ENCODE measurements at regions of chr6 and their contacts with region 1.

Region 1: DNA sequence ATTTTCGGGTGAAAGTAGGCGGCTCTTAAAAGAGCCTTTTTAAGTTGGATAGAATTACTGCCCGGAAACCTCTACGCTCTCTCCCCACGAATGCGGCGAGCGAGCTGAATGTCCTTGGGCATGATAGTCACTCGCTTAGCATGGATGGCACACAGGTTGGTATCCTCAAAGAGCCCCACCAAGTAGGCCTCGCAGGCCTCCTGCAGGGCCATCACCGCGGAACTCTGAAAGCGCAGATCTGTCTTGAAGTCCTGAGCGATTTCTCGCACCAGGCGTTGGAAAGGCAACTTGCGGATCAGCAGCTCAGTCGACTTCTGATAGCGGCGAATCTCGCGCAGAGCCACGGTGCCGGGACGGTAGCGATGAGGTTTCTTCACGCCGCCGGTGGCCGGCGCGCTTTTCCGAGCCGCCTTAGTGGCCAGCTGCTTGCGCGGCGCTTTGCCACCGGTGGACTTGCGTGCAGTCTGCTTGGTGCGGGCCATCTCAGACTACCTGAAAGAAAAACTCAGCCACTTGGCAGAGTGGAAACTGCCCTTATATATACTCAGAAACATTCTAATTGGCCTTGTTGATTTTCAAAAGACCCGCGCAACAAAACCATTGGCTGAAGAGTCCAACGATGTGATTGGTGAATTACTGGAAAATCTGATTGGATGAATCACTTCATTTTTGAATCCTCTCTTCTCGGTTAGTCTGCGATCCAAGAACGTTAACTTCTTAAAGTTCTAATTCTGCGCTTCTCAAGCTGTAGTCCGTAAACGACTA is 93.9 kb upstream of the BTN3A2 start:
- DNase-seq: peak; percentile 80
- ATAC-seq: peak; percentile 38
- H3K4me3 Mint-ChIP-seq: no peak overlapping the region
- H3K27ac Mint-ChIP-seq: no peak overlapping the region
- H3K4me1 Mint-ChIP-seq: peaks cover 24% of the 10 kb centered on the region
- H3K27me3 Mint-ChIP-seq: no peaks in the 10 kb centered on the region

Region 2: DNA sequence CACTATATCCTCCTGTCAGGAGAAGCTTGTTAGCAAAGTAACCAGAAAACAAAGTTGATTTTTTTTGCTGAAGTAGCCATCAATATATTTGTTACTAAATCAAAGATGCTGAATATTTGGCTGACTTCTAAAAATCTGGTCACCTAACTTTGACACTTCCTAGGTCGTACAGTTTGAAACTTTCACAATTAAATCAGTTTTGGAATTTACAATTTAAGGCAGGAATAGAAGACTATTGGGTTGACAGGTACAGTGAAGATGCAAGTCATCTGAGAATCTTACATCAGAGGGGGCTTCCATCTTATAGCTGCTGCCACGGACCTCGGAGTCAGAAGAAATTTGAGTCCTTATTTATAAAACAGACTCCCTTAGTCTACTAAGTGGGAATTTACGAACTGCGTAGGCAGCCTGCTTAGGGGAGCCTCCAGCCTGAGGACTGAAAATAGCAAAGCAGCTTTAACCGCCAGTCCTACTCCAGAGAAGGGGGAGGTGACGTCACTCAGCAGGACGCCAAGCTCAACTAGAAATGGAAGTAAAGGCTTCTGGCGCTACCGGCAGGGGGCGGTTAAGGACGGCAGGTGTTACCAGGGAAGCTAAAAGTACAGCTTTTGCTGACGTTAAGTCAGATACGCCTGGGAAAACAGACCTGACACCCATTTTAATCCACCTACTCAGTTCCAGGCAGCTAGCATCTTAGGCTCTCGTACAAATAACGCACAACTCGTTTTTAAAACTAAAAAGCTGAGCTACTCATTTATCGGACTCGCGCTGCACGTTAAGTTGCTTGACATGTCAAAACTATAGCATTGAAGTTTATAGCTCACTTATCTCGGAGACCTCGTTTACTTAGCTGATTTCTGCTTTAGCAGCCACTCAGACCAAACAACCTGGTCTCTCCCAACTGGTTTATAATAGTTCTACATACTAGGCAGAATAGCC is 244.9 kb before region 1 on chr6:
- POLR2A ChIA-PET with region 1: interaction called, 68 read pairs
- DNase-seq: peak; percentile 86
- ATAC-seq: peak; percentile 35
- H3K4me3 Mint-ChIP-seq: peak overlapping the region; percentile 89
- H3K27ac Mint-ChIP-seq: peak overlapping the region; percentile 99
- H3K4me1 Mint-ChIP-seq: peaks cover 75% of the 10 kb centered on the region
- H3K27me3 Mint-ChIP-seq: no peaks in the 10 kb centered on the region

Region 3: DNA sequence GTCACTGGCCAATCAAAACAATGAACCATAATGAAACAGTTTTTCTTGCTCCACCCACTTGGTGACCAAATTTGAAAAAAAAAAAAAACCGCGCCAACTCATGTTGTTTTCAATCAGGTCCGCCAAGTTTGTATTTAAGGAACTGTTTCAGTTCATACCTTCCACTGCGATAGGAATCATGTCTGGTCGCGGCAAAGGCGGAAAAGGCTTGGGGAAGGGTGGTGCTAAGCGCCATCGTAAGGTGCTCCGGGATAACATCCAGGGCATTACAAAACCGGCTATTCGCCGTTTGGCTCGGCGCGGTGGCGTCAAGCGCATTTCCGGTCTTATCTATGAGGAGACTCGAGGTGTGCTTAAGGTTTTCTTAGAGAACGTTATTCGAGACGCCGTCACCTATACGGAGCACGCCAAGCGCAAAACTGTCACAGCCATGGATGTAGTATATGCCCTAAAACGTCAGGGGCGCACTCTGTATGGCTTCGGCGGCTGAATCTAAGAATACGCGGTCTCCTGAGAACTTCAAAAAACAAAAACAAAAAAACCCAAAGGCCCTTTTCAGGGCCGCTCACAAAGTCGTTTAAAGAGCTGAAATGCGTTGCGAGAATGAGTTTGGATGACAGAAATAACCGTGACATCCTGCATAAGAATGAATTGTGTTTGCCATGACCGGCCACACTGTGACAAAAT is 167.2 kb before region 1 on chr6:
- POLR2A ChIA-PET with region 1: interaction called, 15 read pairs
- DNase-seq: peak; percentile 86
- ATAC-seq: peak; percentile 89
- H3K4me3 Mint-ChIP-seq: peak overlapping the region; percentile 93
- H3K27ac Mint-ChIP-seq: peak overlapping the region; percentile 100
- H3K4me1 Mint-ChIP-seq: peaks cover 18% of the 10 kb centered on the region
- H3K27me3 Mint-ChIP-seq: no peaks in the 10 kb centered on the region

Region 4: DNA sequence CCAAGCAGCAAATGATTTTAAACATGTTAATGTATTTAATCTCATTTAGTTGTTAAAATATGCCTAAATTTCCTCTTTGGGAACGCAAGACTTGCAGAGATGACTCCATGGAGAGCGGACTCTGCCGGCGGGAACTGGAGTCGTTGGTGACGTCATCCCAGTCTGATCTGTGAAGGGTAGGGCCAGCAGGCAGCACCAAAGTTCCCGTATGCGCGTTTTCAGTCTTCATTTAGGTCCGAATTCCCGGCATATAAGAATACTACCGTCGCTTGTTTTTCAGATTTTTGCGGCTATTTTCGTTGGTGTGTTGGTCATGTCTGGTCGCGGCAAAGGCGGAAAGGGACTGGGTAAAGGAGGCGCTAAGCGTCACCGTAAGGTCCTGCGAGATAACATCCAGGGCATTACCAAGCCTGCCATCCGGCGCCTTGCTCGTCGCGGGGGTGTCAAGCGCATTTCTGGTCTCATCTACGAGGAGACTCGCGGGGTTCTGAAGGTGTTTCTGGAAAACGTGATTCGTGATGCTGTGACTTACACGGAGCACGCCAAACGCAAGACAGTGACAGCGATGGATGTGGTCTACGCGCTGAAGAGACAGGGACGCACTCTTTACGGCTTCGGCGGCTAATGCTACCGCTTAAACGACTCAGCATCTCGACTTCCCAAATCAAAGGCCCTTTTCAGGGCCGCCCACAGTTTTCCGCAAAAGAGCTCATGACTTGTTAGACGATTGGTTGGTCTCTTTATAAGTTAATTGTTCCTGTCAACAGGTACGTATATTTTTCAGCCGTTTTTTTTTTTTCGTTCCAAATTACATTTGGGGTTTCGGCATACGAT is 66.5 kb before region 1 on chr6:
- POLR2A ChIA-PET with region 1: interaction called, 275 read pairs
- DNase-seq: peak; percentile 84
- ATAC-seq: peak; percentile 64
- H3K4me3 Mint-ChIP-seq: no peak overlapping the region
- H3K27ac Mint-ChIP-seq: no peak overlapping the region
- H3K4me1 Mint-ChIP-seq: peaks cover 34% of the 10 kb centered on the region
- H3K27me3 Mint-ChIP-seq: no peaks in the 10 kb centered on the region

Region 5: GRCh38 chr6:26240154-26241032 is 30.7 kb before region 1 on chr6:
- POLR2A ChIA-PET with region 1: interaction called, 262 read pairs
- DNase-seq: peak; percentile 81
- ATAC-seq: peak; percentile 82
- H3K4me3 Mint-ChIP-seq: peak overlapping the region; percentile 85
- H3K27ac Mint-ChIP-seq: peak overlapping the region; percentile 98
- H3K4me1 Mint-ChIP-seq: peaks cover 36% of the 10 kb centered on the region
- H3K27me3 Mint-ChIP-seq: no peaks in the 10 kb centered on the region

Region 6: GRCh38 chr6:26411751-26412150 is 140.7 kb after region 1 on chr6:
- POLR2A ChIA-PET with region 1: no interaction called
- DNase-seq: no peak
- ATAC-seq: no peak
- H3K4me3 Mint-ChIP-seq: no peak overlapping the region
- H3K27ac Mint-ChIP-seq: peak overlapping the region; percentile 70
- H3K4me1 Mint-ChIP-seq: peaks cover 14% of the 10 kb centered on the region
- H3K27me3 Mint-ChIP-seq: no peaks in the 10 kb centered on the region

Region 7: GRCh38 chr6:27132532-27133280 is 861.6 kb after region 1 on chr6:
- POLR2A ChIA-PET with region 1: interaction called, 35 read pairs
- DNase-seq: peak; percentile 90
- ATAC-seq: peak; percentile 76
- H3K4me3 Mint-ChIP-seq: no peak overlapping the region
- H3K27ac Mint-ChIP-seq: no peak overlapping the region
- H3K4me1 Mint-ChIP-seq: peaks cover 46% of the 10 kb centered on the region
- H3K27me3 Mint-ChIP-seq: no peaks in the 10 kb centered on the region

Region 8: DNA sequence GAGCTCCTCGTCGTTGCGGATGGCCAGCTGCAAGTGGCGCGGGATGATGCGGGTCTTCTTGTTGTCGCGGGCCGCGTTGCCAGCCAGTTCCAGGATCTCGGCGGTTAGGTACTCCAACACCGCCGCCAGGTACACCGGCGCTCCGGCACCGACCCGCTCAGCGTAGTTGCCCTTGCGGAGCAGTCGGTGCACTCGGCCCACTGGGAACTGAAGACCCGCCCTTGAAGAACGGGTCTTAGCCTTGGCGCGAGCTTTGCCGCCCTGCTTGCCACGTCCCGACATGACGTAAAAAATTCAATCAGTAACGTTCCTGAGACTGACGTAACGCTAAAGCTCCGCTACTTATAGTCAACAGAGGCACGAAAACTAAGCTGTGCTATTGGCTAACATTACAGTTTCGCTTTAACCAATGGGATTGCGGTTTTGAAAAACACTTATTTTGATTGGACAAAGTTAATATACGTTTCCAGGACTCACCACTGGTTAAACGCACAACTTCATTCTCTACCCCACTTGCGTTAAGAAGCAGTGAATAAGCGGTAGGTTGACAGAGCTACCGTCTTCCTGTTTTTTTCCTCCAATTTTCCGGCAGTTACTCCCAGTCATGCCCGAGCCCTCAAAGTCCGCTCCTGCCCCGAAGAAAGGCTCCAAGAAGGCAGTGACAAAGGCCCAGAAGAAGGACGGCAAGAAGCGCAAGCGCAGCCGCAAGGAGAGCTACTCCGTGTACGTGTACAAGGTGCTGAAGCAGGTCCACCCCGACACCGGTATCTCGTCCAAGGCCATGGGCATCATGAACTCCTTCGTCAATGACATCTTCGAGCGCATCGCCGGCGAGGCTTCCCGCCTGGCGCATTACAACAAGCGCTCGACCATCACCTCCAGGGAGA is 1567.2 kb after region 1 on chr6:
- POLR2A ChIA-PET with region 1: interaction called, 11 read pairs
- DNase-seq: peak; percentile 84
- ATAC-seq: peak; percentile 74
- H3K4me3 Mint-ChIP-seq: no peak overlapping the region
- H3K27ac Mint-ChIP-seq: no peak overlapping the region
- H3K4me1 Mint-ChIP-seq: peaks cover 26% of the 10 kb centered on the region
- H3K27me3 Mint-ChIP-seq: peaks cover 2% of the 10 kb centered on the region